ENCODE measurements at regions of chr20 and their contacts with region 1.

Region 1: DNA sequence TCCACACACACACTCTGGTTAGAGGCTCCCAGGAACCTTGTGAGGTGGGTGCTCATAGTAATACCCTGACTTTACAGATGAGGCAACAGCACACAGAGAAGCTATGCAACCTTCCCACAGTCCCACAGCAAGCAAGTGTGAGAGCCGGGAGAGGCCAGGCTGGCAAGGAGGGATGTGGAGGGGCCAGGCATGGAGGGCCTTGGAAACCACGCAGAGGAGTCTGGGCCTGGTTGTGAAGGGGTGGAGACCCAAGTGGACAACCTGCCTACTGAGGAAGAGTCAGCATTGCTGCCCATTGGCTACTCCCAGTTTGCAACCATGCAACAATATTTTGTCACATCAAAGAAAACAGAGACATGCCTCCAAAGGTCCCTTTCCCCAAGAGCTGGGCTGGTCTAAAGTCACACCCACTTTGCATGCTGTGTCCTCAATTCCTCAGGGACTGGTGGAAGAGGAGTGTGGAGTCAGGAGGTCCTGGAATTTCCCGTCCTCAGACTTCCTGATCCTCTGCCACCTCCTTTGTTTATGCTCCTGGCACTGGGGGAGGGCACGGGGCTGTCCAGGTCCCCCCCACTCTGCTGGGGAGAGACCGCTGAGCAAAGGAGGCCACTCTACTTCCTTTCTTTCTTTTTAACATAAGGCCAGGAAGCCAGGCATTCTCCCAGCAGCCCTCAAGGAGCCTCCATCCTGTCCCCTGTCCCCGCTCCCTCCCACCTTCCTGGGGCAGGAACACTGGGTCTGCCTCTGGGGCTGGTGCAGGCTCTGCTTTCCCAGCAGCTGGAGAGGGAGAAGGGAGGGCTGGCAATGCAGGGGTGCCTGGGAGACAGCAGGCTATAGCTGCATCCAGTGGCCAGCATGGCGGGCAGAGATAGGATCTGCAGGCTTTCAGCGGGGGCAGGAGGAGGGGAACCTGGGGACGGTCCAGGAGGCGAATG is 68.3 kb downstream of the NOL4L start:
- DNase-seq: no peak
- H3K4me3 ChIP-seq: no peak overlapping the region
- H3K27ac ChIP-seq: no peak overlapping the region
- H3K4me1 ChIP-seq: peaks cover 0 to 5% (median 0%) of the 10 kb centered on the region in 4 experiments; a peak in 3 of 7 replicates
- H3K27me3 ChIP-seq: no peaks in the 10 kb centered on the region
- CTCF ChIP-seq: no peak
- EP300 ChIP-seq: no peak
- POLR2A ChIP-seq: no peak
- RAD21 ChIP-seq: no peak

Region 2: DNA sequence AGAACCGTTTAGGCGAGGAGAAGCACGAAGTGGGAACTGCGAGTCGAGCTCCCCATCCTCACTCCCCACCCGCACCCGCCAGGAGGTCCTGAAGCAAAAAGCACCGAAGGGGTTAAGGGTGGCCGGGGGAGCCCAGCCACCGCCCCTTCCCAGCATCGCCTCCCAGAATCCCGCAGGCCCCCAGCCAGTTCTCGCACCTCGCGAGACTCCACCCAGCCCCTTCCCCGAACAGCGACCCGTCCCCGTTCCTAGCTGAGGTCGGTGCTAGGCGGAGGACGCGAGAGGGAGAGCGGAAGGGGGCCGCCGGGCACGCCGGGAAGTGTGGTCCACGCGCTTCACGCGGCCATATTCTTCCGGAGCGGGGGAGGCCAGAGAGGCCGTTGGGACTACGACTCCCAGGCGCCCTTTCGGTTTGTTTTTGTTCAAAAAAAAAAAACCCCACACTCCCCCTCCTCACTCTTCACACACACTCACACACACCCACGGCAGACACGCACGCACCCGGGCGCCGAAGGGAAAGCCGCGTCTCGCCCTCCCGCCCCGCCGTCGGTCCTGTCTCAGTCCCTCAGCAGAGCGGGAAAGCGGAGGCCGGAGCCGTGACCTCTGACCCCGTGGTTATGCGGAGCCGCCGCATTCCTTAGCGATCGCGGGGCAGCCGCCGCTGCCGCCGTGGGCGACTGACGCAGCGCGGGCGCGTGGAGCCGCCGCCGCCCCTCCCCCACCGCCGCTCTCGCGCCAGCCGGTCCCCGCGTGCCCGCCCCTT is 158.8 kb before region 1 on chr20 and contains the start of gene ASXL1:
- CTCF ChIA-PET with region 1: no interaction called
- POLR2A ChIA-PET with region 1: no interaction called
- DNase-seq: peak; percentile 93 to 100
- H3K4me3 ChIP-seq: peak within 1 kb of the TSS; percentile 73 to 98 (median 85)
- H3K27ac ChIP-seq: peak within 1 kb of the TSS; percentile 82
- H3K4me1 ChIP-seq: peaks cover 0 to 3% (median 0%) of the 10 kb centered on the region in 4 experiments; a peak in 3 of 7 replicates
- H3K27me3 ChIP-seq: peaks cover 16 to 34% (median 30%) of the 10 kb centered on the region in 4 experiments
- CTCF ChIP-seq: no peak
- EP300 ChIP-seq: no peak
- POLR2A ChIP-seq: peak in 1 of 2 experiments; percentile 39; a peak in 2 of 3 replicates
- RAD21 ChIP-seq: no peak
- total RNA-seq, gene ASXL1: 25.6 and 26.5 TPM in 2 replicates

Region 3: DNA sequence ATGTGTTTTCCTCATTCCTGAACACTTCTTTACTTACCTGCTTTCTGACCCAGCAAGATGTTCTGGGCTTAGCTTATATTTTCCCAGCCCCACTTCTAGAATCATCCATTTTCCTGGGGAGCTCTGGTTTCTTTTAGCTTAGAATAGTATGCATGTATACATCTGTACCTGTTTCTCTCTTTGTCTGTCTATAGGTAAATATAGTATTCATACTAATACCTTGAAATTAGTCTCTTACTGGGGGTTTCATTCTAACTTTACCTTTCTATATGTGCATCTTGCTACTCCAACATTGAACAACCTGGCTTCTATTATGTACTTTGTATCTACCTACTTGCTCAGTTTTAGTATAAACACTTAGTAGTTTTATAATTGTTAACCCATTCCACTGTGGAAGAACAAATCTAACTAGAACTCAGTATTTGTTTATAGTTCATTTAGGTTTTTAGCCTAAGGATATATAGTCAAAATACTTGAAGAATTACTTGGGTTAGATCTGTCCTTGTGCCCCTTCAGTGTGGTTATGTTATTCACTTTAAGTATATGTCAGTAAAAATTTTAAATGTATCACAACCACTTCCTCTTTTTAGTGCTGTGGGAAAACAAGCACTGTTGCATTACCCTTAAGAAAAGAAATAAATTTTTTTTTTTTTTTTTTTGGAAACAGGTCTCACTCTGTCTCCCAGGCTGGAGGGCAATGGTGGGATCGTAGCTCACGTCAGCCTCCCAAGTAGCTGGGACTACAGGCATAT is 104.7 kb before region 1 on chr20:
- CTCF ChIA-PET with region 1: no interaction called
- POLR2A ChIA-PET with region 1: no interaction called
- DNase-seq: no peak
- H3K4me3 ChIP-seq: no peak overlapping the region
- H3K27ac ChIP-seq: no peak overlapping the region
- H3K4me1 ChIP-seq: no peaks in the 10 kb centered on the region; a peak in 1 of 7 replicates
- H3K27me3 ChIP-seq: no peaks in the 10 kb centered on the region
- CTCF ChIP-seq: no peak
- EP300 ChIP-seq: no peak
- POLR2A ChIP-seq: no peak
- RAD21 ChIP-seq: no peak

Region 4: GRCh38 chr20:32445539-32446273 is 71.1 kb before region 1 on chr20:
- CTCF ChIA-PET with region 1: no interaction called
- POLR2A ChIA-PET with region 1: no interaction called
- DNase-seq: no peak
- H3K4me3 ChIP-seq: no peak overlapping the region
- H3K27ac ChIP-seq: no peak overlapping the region
- H3K4me1 ChIP-seq: peaks cover 0 to 5% (median 3%) of the 10 kb centered on the region in 4 experiments; a peak in 3 of 7 replicates
- H3K27me3 ChIP-seq: no peaks in the 10 kb centered on the region
- CTCF ChIP-seq: no peak
- EP300 ChIP-seq: no peak
- POLR2A ChIP-seq: no peak
- RAD21 ChIP-seq: no peak

Region 5: GRCh38 chr20:32535953-32536823 is 19.3 kb after region 1 on chr20:
- CTCF ChIA-PET with region 1: interaction called, 47 read pairs
- POLR2A ChIA-PET with region 1: no interaction called
- DNase-seq: peak in 1 of 2 experiments; percentile 74
- H3K4me3 ChIP-seq: peak overlapping the region; percentile 17 to 62 (median 40); a peak in 7 of 8 replicates
- H3K27ac ChIP-seq: no peak overlapping the region
- H3K4me1 ChIP-seq: peaks cover 10 to 24% (median 17%) of the 10 kb centered on the region in 4 experiments
- H3K27me3 ChIP-seq: peaks cover 3 to 22% (median 20%) of the 10 kb centered on the region in 4 experiments
- CTCF ChIP-seq: no peak
- EP300 ChIP-seq: no peak
- POLR2A ChIP-seq: no peak
- RAD21 ChIP-seq: no peak